Activated CD4-positive, alpha-beta T cell treated with anti-CD3 and anti-CD28 coated beads, Interleukin-2, amount 10 ng/mL, durations not matched to agents 7 days and 5 days (primary cell): ENCODE measurements at regions of chr16 and their contacts with region 1.

Region 1: GRCh38 chr16:55465077-55465896 is 13.7 kb upstream of the MMP2 start:
- DNase-seq: peak; percentile 87
- H3K4me3 Mint-ChIP-seq: no peak overlapping the region
- H3K27ac Mint-ChIP-seq: no peak overlapping the region
- H3K4me1 Mint-ChIP-seq: peaks cover 4% of the 10 kb centered on the region
- H3K27me3 Mint-ChIP-seq: no peaks in the 10 kb centered on the region

Region 2: DNA sequence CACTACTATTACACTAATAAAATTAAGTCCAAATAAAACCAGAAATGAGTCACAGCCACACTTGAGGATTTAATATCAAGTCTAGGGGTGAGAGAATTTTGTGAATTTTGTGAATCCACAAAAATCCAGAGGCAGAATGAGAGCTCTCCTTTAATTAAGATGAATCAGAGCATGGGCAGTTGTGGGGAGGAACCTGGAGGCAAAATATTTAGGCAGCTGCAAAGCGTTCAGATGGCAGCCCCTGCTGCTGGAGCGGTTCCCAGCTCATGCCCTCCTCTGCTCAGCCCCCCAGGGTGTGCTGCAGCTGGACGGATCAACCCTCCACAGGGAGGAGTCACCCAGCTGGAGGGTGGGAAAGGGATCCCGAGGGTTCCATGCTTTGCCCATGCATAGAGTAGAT is 184.7 kb before region 1 on chr16:
- CTCF ChIA-PET with region 1: no interaction called
- POLR2A ChIA-PET with region 1: no interaction called
- DNase-seq: no peak
- H3K4me3 Mint-ChIP-seq: no peak overlapping the region
- H3K27ac Mint-ChIP-seq: no peak overlapping the region
- H3K4me1 Mint-ChIP-seq: no peaks in the 10 kb centered on the region
- H3K27me3 Mint-ChIP-seq: no peaks in the 10 kb centered on the region

Region 3: DNA sequence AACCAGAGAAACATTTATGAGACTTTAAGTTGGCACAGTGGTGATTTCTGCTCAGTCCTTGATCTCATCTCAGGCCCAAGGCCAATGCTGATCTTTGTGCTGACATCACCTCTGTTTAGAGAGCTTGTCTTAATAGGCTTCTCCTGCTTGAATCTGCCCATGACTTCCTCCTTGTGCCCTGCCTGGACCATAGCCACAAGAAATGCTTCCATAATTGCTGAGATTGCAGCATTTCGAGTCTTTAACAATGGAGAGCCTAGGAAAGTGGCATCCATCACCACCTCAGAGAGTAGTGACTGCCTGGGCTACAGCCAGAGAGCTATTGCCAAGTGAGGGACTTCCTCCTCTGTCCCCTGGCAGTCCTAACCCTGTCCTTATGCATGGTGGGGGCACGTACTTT is 11.4 kb before region 1 on chr16:
- CTCF ChIA-PET with region 1: interaction called, 11 read pairs
- POLR2A ChIA-PET with region 1: no interaction called
- DNase-seq: no peak
- H3K4me3 Mint-ChIP-seq: no peak overlapping the region
- H3K27ac Mint-ChIP-seq: no peak overlapping the region
- H3K4me1 Mint-ChIP-seq: no peaks in the 10 kb centered on the region
- H3K27me3 Mint-ChIP-seq: no peaks in the 10 kb centered on the region

Region 4: GRCh38 chr16:55475919-55476318 is 10.6 kb after region 1 on chr16:
- CTCF ChIA-PET with region 1: interaction called, 19 read pairs
- POLR2A ChIA-PET with region 1: no interaction called
- DNase-seq: no peak
- H3K4me3 Mint-ChIP-seq: no peak overlapping the region
- H3K27ac Mint-ChIP-seq: no peak overlapping the region
- H3K4me1 Mint-ChIP-seq: peaks cover 10% of the 10 kb centered on the region
- H3K27me3 Mint-ChIP-seq: peaks cover 30% of the 10 kb centered on the region

Region 5: DNA sequence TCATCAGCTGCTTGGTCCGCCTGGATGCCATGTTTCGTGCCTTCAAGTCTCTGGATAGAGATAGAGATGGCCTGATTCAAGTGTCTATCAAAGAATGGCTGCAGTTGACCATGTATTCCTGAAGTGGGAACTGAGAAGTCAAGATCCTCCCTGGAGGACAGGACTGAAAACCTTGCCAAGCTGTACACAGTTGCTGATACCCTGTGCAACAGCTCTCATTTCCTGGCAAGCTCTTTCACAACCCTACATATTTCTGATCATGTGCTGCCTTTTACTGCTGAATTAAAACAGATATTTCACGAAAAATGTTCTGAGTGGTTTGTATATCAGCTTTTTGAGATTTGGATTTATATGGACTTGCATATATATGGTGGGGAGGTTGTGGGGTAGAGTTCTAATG is 102.1 kb after region 1 on chr16:
- CTCF ChIA-PET with region 1: no interaction called
- POLR2A ChIA-PET with region 1: no interaction called
- DNase-seq: no peak
- H3K4me3 Mint-ChIP-seq: no peak overlapping the region
- H3K27ac Mint-ChIP-seq: no peak overlapping the region
- H3K4me1 Mint-ChIP-seq: no peaks in the 10 kb centered on the region
- H3K27me3 Mint-ChIP-seq: peaks cover 18% of the 10 kb centered on the region

Region 6: DNA sequence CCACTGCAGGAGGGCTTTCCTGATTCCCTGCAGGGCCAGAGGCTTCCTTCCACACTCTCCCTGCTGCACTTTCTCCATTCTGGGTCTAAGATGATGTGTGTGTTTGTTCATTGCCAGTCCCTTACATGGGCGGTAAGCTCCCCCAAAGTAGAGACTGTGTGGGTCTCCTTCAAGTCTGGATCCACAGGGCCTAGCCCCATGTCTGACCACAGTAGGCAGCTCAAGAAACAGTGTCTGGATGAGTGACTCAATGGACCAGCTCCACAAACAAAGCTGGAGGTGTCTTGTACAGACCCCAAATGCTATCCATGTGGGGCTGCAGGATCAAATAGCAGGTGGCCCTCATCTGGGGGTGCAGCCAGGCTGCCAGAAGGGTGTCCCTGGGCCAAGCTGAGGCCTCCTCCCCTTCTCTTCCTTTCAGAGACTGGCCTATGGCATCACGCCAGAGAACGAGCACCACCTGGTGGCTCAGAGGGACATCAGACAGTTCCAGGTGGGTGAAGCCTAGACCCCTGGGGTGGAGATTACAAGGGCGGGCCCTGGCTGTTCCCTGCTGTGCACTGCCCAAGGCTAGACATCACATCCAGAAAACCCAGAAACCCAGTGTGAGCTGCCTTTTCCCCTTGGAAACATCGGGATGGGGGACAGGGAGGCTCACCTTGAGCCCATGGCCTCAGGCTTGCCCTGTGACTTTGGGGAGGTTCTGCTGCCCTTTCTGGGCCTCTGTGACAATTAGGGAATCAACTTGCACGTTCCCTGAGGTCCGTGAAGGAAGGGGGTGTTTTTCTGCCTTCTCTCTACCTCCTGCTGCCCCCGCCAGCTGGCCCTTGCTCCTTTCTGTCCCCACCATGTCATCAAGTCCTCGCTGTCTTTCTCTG is 236.4 kb after region 1 on chr16:
- CTCF ChIA-PET with region 1: interaction called, 23 read pairs
- POLR2A ChIA-PET with region 1: no interaction called
- DNase-seq: peak; percentile 46
- H3K4me3 Mint-ChIP-seq: no peak overlapping the region
- H3K27ac Mint-ChIP-seq: no peak overlapping the region
- H3K4me1 Mint-ChIP-seq: peaks cover 11% of the 10 kb centered on the region
- H3K27me3 Mint-ChIP-seq: peaks cover 8% of the 10 kb centered on the region